ENCODE measurements at regions of chr11 and their contacts with region 1.

Region 1: DNA sequence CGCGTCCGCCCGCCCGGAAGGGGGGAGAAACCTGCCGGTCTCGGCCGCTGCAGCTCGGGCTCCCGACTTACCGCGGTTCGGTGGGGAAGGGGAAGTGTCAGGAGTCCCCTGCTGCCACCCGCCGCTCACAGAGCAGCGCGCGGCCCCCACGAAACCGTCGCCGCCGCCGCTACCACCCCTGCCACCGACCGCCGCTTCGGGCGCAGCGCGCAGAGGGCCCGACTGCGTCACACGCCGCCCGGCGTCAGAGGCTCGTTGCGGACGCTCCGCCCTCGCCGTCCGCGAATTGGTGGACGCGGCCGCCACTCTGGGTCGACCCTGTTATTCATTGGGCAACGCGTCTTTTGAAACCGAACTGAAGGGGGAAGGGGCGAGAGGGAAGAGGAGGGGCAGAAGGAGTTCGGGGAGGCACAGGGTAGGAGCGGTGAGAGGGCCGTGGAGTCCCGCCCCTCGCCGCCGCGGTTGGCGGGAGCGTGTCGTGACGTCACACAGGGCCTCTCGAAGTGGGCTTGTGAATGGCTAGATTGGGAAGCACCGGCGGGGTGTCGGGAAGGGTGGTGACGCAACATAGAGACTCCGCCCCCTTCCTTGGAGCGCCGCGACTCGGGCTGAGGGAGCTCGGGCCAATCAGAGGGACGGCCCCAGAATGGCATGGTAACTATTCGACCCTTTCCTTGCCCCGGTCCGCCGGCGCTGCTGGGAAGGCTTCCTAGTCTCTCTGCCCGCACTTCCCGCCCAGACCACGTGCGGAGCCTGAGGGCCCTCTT is at the start of gene NUP98:
- DNase-seq: peak; percentile 99 to 100
- ATAC-seq: peak; percentile 92 to 95
- H3K4me3 ChIP-seq: peak within 1 kb of the TSS; percentile 90 to 98 (median 95)
- H3K27ac ChIP-seq: peak within 1 kb of the TSS; percentile 96 to 100 (median 98)
- H3K4me1 ChIP-seq: peaks cover 26 to 29% of the 10 kb centered on the region in 2 donors
- H3K27me3 ChIP-seq: no peaks in the 10 kb centered on the region
- CTCF ChIP-seq: peak in 3 of 5 experiments; percentile 10 to 33 (median 19)
- POLR2A ChIP-seq: peak; percentile 100
- total RNA-seq, gene NUP98: 65.2 to 128 (median 102) TPM

Region 2: GRCh38 chr11:3609416-3610265 is 187.9 kb before region 1 on chr11:
- in situ Hi-C with region 1: no loop called
- intact Hi-C with region 1: loop called (anchors 10 kb)
- DNase-seq: no peak
- ATAC-seq: no peak
- H3K4me3 ChIP-seq: no peak overlapping the region
- H3K27ac ChIP-seq: no peak overlapping the region
- H3K4me1 ChIP-seq: peaks cover 8 to 14% of the 10 kb centered on the region in 2 donors
- H3K27me3 ChIP-seq: no peaks in the 10 kb centered on the region
- CTCF ChIP-seq: peak; percentile 64 to 89 (median 83)
- POLR2A ChIP-seq: no peak

Region 3: GRCh38 chr11:3642071-3642951 is 155.2 kb before region 1 on chr11:
- in situ Hi-C with region 1: no loop called
- intact Hi-C with region 1: loop called (anchors 1 kb)
- DNase-seq: peak; percentile 91 to 96
- ATAC-seq: peak; percentile 67
- H3K4me3 ChIP-seq: peak overlapping the region; percentile 67 to 88 (median 78)
- H3K27ac ChIP-seq: peak overlapping the region; percentile 97 to 100 (median 98)
- H3K4me1 ChIP-seq: peaks cover 32 to 47% of the 10 kb centered on the region in 2 donors
- H3K27me3 ChIP-seq: no peaks in the 10 kb centered on the region
- CTCF ChIP-seq: no peak
- POLR2A ChIP-seq: peak; percentile 88 to 95

Region 4: DNA sequence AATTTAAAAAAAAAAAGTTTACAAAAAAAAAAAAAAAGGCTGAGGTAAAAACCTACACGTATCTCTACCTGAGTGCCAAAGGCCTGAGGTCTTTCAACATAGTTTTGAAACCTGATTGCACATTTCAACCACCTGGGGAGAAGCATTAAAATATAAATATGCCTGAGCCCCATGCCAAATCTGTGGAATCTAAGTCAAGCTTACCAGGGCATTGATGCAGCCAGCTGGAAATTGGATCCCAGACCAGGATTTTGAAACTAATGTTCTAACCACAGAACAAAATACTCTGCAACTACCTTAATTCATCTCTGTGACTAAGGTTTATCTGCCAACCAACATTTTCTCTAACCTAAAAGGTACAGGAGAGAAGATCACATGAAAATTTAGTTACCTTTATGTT is 87.5 kb before region 1 on chr11:
- in situ Hi-C with region 1: no loop called
- intact Hi-C with region 1: loop called (anchors 1 kb)
- DNase-seq: peak; percentile 81 to 85
- ATAC-seq: peak; percentile 94 to 96
- H3K4me3 ChIP-seq: no peak overlapping the region
- H3K27ac ChIP-seq: peak overlapping the region; percentile 83 to 91 (median 86)
- H3K4me1 ChIP-seq: peaks cover 52% of the 10 kb centered on the region in 2 donors
- H3K27me3 ChIP-seq: no peaks in the 10 kb centered on the region
- CTCF ChIP-seq: no peak
- POLR2A ChIP-seq: no peak

Region 5: GRCh38 chr11:3841426-3842350 is 44.2 kb after region 1 on chr11:
- in situ Hi-C with region 1: no loop called
- intact Hi-C with region 1: loop called (anchors 1 kb)
- DNase-seq: peak; percentile 68 to 85
- ATAC-seq: peak; percentile 82 to 83
- H3K4me3 ChIP-seq: peak overlapping the region; percentile 79 to 91 (median 86)
- H3K27ac ChIP-seq: peak overlapping the region; percentile 94 to 99 (median 97)
- H3K4me1 ChIP-seq: peaks cover 10 to 19% of the 10 kb centered on the region in 2 donors
- H3K27me3 ChIP-seq: no peaks in the 10 kb centered on the region
- CTCF ChIP-seq: peak; percentile 67 to 89 (median 75)
- POLR2A ChIP-seq: peak in 1 of 2 donors; percentile 67